ENCODE measurements at regions of chr2 and their contacts with region 1.

Region 1: GRCh38 chr2:171811245-171811628 is 82.8 kb downstream of the SLC25A12 start:
- DNase-seq: no peak
- H3K4me3 ChIP-seq: no peak overlapping the region
- H3K27ac ChIP-seq: no peak overlapping the region
- H3K4me1 ChIP-seq: peaks cover 0 to 19% (median 4%) of the 10 kb centered on the region in 4 donors
- H3K27me3 ChIP-seq: no peaks in the 10 kb centered on the region
- CTCF ChIP-seq: peak in 2 of 4 experiments; percentile 20 to 36
- EP300 ChIP-seq: no peak
- POLR2A ChIP-seq: no peak

Region 2: DNA sequence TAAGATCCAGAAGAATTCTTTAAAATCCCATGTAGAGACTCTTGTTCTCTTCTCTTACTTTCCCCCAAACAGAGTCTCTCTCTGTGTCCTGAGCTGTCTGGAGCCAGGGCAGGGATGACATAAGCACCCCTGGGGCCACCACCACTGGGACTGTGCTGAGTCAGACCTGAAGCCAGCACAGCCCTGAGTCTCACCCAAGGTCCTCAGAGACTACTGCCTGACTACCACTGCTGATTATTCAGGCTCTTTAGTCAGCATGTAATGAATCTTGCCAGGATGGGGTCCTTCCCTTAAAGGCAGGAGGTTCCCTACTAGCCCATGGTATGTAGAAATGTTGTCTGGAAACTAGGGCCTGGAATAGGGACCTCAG is 158.8 kb before region 1 on chr2:
- intact Hi-C with region 1: no loop called
- DNase-seq: no peak
- H3K4me3 ChIP-seq: no peak overlapping the region
- H3K27ac ChIP-seq: no peak overlapping the region
- H3K4me1 ChIP-seq: no peaks in the 10 kb centered on the region
- H3K27me3 ChIP-seq: no peaks in the 10 kb centered on the region
- CTCF ChIP-seq: no peak
- EP300 ChIP-seq: no peak
- POLR2A ChIP-seq: no peak

Region 3: DNA sequence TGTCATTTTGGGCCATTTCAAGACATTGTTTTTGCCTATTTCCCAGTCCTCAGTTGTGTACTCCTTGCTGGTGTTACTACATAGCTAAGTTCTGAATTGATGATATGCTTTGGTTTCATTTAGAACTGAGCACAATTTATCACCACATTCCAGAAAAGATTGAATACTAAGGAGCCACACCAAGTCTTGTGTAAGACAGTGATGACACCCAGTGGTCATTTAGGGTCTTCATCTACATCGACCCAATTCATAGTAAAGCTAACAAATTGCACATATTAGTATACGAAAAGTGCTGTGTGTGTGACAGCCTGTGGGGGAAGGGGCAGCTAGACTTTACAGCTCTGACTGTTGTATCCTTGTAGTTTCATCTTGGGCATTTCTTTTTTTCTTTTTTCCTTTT is 302.4 kb after region 1 on chr2:
- intact Hi-C with region 1: loop called (anchors 5 kb)
- DNase-seq: no peak
- H3K4me3 ChIP-seq: no peak overlapping the region
- H3K27ac ChIP-seq: no peak overlapping the region
- H3K4me1 ChIP-seq: no peaks in the 10 kb centered on the region
- H3K27me3 ChIP-seq: peaks cover 3 to 36% (median 11%) of the 10 kb centered on the region in 3 donors
- CTCF ChIP-seq: peak in 2 of 4 experiments; percentile 10 to 26
- EP300 ChIP-seq: no peak
- POLR2A ChIP-seq: no peak

Measured in sigmoid colon (tissue), 7 donors.